ENCODE measurements at regions of chr21 and their contacts with region 1.

Region 1: GRCh38 chr21:37916310-37917051 is at the start of gene KCNJ6:
- DNase-seq: peak; percentile 87
- ATAC-seq: peak; percentile 83
- H3K4me3 Mint-ChIP-seq: peak within 1 kb of the TSS; percentile 86
- H3K27ac Mint-ChIP-seq: 0 out of 2 replicates have a peak within 1 kb of the TSS, but pooled peaks have one; percentile 39
- H3K4me1 Mint-ChIP-seq: peaks cover 39% of the 10 kb centered on the region
- H3K27me3 Mint-ChIP-seq: peaks cover 34% of the 10 kb centered on the region
- CTCF ChIP-seq: peak; percentile 39
- total RNA-seq, gene KCNJ6: 0.23 to 0.35 TPM (median 0.34 TPM) in 3 replicates

Region 2: DNA sequence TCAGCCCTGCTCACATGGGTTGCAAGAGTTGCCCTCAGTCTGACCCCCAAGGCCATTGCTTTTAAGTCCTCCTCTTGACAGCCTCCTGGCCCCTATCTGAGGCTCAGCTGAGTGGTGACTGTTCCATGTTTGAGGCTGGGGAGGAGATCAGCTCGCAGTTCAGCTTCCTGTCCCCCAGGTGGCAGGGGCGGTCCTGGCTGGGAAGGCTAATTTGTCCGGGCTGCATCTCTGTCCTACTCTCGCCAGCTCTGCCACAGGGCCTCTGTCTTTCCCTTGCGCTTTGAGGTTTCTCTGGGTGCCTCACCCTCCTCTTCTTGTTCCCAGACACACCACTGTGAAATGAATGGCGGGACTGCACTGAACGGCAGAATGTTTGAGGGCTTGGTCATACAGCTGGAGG is 157.5 kb before region 1 on chr21:
- CTCF ChIA-PET with region 1: interaction called, 33 read pairs
- POLR2A ChIA-PET with region 1: interaction called, 4 read pairs
- DNase-seq: peak; percentile 79
- ATAC-seq: peak; percentile 89
- H3K4me3 Mint-ChIP-seq: no peak overlapping the region
- H3K27ac Mint-ChIP-seq: no peak overlapping the region
- H3K4me1 Mint-ChIP-seq: peaks cover 27% of the 10 kb centered on the region
- H3K27me3 Mint-ChIP-seq: no peaks in the 10 kb centered on the region
- CTCF ChIP-seq: peak; percentile 65

Region 3: GRCh38 chr21:37958537-37958936 is 42.1 kb after region 1 on chr21:
- CTCF ChIA-PET with region 1: interaction called, 10 read pairs
- POLR2A ChIA-PET with region 1: no interaction called
- DNase-seq: no peak
- ATAC-seq: no peak
- H3K4me3 Mint-ChIP-seq: no peak overlapping the region
- H3K27ac Mint-ChIP-seq: no peak overlapping the region
- H3K4me1 Mint-ChIP-seq: no peaks in the 10 kb centered on the region
- H3K27me3 Mint-ChIP-seq: no peaks in the 10 kb centered on the region
- CTCF ChIP-seq: no peak

Region 4: GRCh38 chr21:37983336-37984095 is 67.0 kb after region 1 on chr21:
- CTCF ChIA-PET with region 1: no interaction called
- POLR2A ChIA-PET with region 1: no interaction called
- DNase-seq: no peak
- ATAC-seq: no peak
- H3K4me3 Mint-ChIP-seq: no peak overlapping the region
- H3K27ac Mint-ChIP-seq: no peak overlapping the region
- H3K4me1 Mint-ChIP-seq: peaks cover 8% of the 10 kb centered on the region
- H3K27me3 Mint-ChIP-seq: no peaks in the 10 kb centered on the region
- CTCF ChIP-seq: no peak